Mucosa of descending colon (tissue), 3 donors: ENCODE measurements at regions of chr4 and their contacts with region 1.

Region 1: GRCh38 chr4:83012687-83013419 is 2.2 kb upstream of the LIN54 start:
- DNase-seq: peak; percentile 96 to 99 (median 98)
- ATAC-seq: peak; percentile 95
- H3K4me3 ChIP-seq: peak overlapping the region; percentile 65
- H3K4me1 ChIP-seq: peaks cover 27% of the 10 kb centered on the region
- CTCF ChIP-seq: peak; percentile 73

Region 2: DNA sequence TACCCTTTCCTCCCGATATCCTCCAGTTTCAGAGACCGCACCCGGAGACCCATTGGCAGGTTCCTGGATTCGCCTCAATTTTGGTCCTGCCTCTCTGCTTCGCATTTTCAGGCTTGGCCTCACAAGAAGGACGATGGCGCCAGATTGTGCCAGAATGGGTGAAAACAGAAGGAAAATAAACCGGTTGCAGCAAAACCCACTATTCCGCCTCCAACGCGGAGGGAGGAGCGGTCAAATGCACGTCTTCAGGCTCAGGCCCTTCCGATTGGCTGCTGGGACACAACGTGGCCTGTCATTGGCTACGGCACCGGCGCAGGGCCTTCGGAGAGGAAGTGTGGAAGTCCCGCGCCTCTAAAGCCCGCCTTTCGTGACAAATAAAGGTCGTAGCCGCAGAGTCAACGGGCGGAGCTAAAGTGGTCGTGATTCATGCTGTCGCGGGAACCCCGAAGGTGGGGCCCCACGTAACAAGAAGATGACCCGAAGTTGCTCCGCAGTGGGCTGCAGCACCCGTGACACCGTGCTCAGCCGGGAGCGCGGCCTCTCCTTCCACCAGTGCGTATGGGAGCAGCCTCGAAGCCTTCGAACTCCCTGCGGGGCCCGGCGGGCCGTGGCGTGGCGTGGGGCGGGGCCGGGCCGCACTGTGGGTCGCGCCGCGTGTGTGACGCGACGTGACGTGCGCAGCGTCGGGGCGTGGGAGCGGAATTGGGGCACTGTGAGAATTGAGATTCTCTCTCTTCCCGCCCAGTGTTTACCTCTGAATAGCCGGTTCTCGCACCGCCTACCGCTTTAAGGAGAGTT is 112.3 kb before region 1 on chr4 and contains the start of gene THAP9:
- intact Hi-C with region 1: loop called in 1 of 2 experiments (anchors 5 kb)
- DNase-seq: peak; percentile 97 to 99 (median 98)
- ATAC-seq: peak; percentile 95
- H3K4me3 ChIP-seq: peak within 1 kb of the TSS; percentile 27
- H3K4me1 ChIP-seq: peaks cover 29% of the 10 kb centered on the region
- CTCF ChIP-seq: no peak
- total RNA-seq, gene THAP9: 2.9 to 5.1 (median 5.0) TPM